Gastrocnemius medialis (tissue), 4 donors: ENCODE measurements at regions of chr14 and their contacts with region 1.

Region 1: DNA sequence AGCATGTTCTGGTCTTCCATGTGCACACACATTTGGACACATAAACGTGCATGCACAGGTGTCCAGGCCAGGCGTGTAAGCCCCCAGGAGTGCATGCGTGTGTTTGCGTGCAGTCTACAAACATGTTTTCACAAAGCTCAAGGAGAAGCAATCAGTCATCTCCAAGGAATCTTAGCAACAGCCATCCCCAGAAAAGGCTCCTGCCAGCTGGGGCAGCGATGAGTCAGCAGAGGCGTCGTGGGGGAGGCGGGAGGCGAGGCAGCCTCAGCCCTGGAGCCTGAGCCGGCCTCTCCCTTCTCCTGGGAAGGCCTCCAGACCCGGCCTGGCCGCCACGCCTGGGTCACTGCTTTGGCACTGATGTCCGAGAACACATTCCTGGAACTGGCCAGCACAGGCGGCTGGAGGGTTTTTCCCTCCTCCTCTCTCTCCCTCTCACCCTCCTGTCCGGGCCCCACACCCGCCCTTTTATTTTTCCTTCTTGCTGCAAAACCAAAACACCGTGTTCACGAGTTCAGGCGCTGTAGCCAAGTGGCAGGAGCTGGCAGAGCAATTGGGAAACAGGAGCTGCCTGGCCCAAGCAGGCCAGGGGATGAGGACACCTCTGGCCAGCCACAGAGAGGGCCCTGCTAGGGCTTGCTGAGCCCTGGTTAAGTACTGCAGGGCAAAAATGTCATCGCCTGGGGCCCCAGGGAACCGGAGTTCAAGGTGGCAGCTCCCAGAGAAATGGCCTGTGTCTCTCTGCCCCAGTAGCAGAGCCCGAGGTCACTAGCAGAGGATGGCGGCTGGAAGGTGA is 92.7 kb downstream of the LRRC74A start:
- DNase-seq: peak; percentile 96 to 99
- ATAC-seq: peak; percentile 71 to 72
- H3K4me3 ChIP-seq: peak overlapping the region; percentile 7 to 49 (median 32)
- H3K27ac ChIP-seq: peak overlapping the region; percentile 90 to 98 (median 94)
- H3K4me1 ChIP-seq: peaks cover 49% of the 10 kb centered on the region in 2 donors
- H3K27me3 ChIP-seq: no peaks in the 10 kb centered on the region
- CTCF ChIP-seq: no peak
- POLR2A ChIP-seq: peak in 1 of 2 donors; percentile 40

Region 2: GRCh38 chr14:76784266-76785264 is 134.4 kb before region 1 on chr14:
- in situ Hi-C with region 1: no loop called
- intact Hi-C with region 1: no loop called
- DNase-seq: peak; percentile 49 to 62
- ATAC-seq: peak; percentile 82 to 88
- H3K4me3 ChIP-seq: no peak overlapping the region
- H3K27ac ChIP-seq: peak overlapping the region in 2 of 4 donors; percentile 1 to 29
- H3K4me1 ChIP-seq: peaks cover 6 to 15% of the 10 kb centered on the region in 2 donors
- H3K27me3 ChIP-seq: no peaks in the 10 kb centered on the region
- CTCF ChIP-seq: peak; percentile 55 to 84 (median 76)
- POLR2A ChIP-seq: no peak

Region 3: DNA sequence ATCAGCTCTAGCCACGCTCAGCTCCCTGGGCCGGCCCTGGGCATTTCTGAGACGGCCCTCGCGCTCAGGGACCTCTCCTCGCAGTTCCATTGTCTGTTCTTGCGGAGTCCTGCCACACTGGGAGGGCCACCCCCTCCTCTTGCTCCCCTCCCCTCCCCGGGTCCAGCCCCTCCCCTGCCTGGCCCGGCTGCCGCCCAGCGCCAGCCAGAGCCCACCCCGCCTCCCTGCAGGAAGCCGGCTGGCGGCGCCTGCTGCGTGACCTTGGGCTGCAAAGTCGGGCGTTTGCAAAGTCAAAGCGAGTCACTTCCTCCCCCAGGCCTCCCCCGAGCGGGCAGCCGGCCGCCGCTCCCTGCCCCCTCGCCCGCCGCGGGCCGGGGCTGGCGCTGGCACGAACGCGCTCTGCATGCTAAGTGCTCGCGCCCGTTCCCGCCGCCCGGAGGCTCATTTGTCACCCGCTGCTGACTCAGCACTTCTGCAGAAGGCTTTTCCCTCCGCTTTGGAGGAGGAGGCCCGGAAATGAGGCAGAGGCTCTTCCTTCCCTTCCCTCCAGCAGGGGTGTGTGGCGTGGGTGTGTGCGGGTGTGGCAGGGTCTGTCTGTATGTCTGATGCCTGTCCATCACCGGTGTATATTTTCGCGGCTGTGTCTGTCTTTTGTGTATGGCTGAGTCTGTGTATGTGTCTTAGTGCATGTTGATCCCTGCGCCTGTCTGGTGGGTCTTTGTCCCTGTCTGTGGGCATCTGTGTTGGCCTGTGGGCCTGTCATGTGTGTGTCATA is 37.6 kb after region 1 on chr14:
- in situ Hi-C with region 1: no loop called
- intact Hi-C with region 1: loop called (anchors 1 kb)
- DNase-seq: peak; percentile 75 to 90
- ATAC-seq: peak; percentile 47 to 57
- H3K4me3 ChIP-seq: peak overlapping the region; percentile 50 to 62 (median 58)
- H3K27ac ChIP-seq: peak overlapping the region; percentile 96 to 99 (median 97)
- H3K4me1 ChIP-seq: peaks cover 49 to 51% of the 10 kb centered on the region in 2 donors
- H3K27me3 ChIP-seq: no peaks in the 10 kb centered on the region
- CTCF ChIP-seq: peak in 2 of 5 experiments; percentile 10 to 28
- POLR2A ChIP-seq: peak in 1 of 2 donors; percentile 41

Region 4: DNA sequence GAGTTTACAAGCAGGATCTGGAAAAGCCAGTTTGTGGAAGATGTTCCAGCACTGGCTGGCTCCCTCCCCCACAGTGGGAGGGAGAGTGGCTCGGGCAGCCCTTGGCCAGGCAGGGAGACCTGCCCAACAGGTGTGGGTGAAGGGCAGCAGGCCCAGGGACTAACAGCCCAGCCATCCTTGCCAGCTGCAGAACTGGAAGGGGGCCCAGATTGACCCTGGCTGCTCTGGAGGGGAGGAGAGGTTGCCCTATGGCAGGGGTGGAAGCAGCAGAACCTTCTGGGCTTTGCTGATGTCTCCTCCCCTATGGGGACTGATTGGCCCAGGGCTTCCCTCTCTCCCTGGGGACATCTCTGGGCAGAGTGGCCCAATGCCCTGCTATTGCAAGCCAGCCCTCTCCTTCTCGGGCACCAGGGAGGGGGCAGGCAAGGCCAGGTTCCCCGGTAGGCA is 89.1 kb after region 1 on chr14:
- in situ Hi-C with region 1: no loop called
- intact Hi-C with region 1: loop called (anchors 1 kb)
- DNase-seq: peak; percentile 74 to 96
- ATAC-seq: peak; percentile 92
- H3K4me3 ChIP-seq: no peak overlapping the region
- H3K27ac ChIP-seq: peak overlapping the region; percentile 66 to 83 (median 78)
- H3K4me1 ChIP-seq: peaks cover 27 to 41% of the 10 kb centered on the region in 2 donors
- H3K27me3 ChIP-seq: no peaks in the 10 kb centered on the region
- CTCF ChIP-seq: no peak
- POLR2A ChIP-seq: no peak

Region 5: GRCh38 chr14:77033622-77034521 is 114.9 kb after region 1 on chr14:
- in situ Hi-C with region 1: no loop called
- intact Hi-C with region 1: loop called (anchors 2 kb)
- DNase-seq: peak; percentile 69 to 84
- ATAC-seq: peak; percentile 22 to 34
- H3K4me3 ChIP-seq: peak overlapping the region; percentile 55 to 70 (median 59)
- H3K27ac ChIP-seq: peak overlapping the region; percentile 95 to 100 (median 100)
- H3K4me1 ChIP-seq: peaks cover 70 to 74% of the 10 kb centered on the region in 2 donors
- H3K27me3 ChIP-seq: no peaks in the 10 kb centered on the region
- CTCF ChIP-seq: no peak
- POLR2A ChIP-seq: peak; percentile 50 to 55

Region 6: GRCh38 chr14:77040059-77040740 is 121.3 kb after region 1 on chr14:
- in situ Hi-C with region 1: no loop called
- intact Hi-C with region 1: loop called (anchors 1 kb)
- DNase-seq: peak; percentile 94 to 96
- ATAC-seq: peak; percentile 66
- H3K4me3 ChIP-seq: peak overlapping the region; percentile 52 to 65 (median 58)
- H3K27ac ChIP-seq: peak overlapping the region; percentile 84 to 100 (median 96)
- H3K4me1 ChIP-seq: peaks cover 75 to 90% of the 10 kb centered on the region in 2 donors
- H3K27me3 ChIP-seq: no peaks in the 10 kb centered on the region
- CTCF ChIP-seq: no peak
- POLR2A ChIP-seq: peak in 1 of 2 donors; percentile 44

Region 7: DNA sequence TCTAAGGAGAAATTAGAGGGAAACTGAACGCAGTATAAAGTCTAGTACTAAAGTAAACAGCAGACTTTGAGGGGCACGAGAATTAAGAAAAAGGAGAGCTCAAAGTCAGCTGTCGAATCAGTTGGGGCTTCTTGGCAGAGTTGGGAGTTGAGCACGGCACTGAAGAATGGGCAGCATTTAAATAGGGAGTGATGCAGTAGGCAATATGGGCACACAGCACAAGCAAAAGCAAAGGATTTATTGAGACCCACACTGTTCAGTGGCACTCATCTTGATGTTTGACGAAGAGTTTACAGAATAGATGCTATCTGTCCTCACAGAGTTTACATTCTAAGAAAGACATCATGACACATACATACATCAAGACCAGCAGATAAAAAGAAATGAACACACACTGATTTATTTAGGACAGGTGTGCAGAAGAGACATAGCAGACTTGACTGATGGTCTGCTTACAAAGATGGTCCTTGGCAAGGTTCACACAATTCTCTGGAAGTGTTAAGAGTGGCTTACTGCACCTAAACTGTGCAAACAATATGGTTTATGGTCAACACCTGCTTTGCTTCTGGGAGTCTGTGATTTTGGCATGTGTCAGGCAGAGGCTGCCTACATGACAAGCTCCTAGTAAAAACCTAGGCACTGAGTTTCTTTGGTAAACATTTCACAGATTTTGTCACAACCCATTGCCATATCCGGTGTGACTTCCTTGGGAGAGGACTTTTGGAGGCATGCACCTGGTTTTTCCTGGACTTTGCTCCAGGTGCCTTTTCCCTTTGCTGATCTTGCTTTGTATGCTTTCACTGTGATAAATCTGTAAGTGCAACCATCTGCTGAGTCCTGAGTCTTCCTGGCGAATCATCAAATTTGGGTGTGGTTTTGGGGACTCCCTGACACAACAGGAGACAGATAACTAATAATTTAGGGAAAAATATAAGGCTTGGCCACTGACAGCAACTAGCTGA is 762.5 kb after region 1 on chr14:
- in situ Hi-C with region 1: no loop called
- intact Hi-C with region 1: no loop called
- DNase-seq: peak in 1 of 2 donors; percentile 12
- ATAC-seq: peak; percentile 62 to 83
- H3K4me3 ChIP-seq: peak overlapping the region in 1 of 4 donors; percentile 8
- H3K27ac ChIP-seq: peak overlapping the region; percentile 63 to 84 (median 78)
- H3K4me1 ChIP-seq: peaks cover 19% of the 10 kb centered on the region in 2 donors
- H3K27me3 ChIP-seq: no peaks in the 10 kb centered on the region
- CTCF ChIP-seq: no peak
- POLR2A ChIP-seq: no peak